B cell (primary cell): ENCODE measurements at regions of chr3 and their contacts with region 1.

Region 1: DNA sequence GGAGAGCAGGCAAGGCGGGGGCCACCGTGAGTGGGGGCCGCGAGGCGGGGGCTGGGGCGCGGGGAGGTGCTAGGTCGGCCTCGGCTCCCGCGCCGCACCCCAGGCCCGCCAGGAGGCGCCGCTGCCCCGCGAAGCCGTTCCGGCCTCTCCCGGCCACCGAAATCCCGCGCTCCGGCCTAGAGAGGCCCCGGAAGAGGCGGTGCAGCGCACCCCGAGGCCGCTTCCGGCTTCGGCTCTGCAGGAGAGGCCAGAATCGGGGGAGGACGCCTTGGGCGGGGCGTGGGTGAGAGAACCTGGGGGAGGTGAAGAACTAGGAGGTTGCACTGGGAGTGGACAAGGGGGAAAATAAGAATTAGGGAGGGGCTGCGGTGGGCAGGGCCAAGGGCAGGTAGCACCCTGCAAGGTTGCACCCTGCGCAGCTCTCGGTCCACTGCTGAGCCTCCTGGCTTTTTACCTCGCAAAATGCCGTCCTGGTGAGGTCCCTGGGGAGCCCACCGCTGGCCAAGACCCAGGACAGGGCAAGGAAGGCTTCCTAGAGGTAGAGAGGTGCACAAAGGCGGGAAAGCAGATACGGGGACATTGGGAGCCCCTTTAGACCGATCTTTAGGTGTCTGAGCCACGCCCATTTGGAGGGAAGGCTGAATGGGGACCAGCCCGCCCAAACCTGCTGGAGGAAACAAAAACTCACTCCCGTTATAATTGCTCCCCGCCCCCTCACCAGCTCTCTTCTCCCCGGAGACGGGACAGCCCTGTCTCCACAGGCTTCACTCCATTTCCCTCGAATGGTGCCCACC is 8.4 kb upstream of the GNAI2 start:
- DNase-seq: peak; percentile 93
- ATAC-seq: peak; percentile 81
- H3K4me3 ChIP-seq: peak overlapping the region; percentile 66 to 82 (median 72)
- H3K4me3 Mint-ChIP-seq: peak overlapping the region; percentile 96
- H3K27ac ChIP-seq: peak overlapping the region; percentile 21 to 41
- H3K27ac Mint-ChIP-seq: peak overlapping the region; percentile 94
- H3K4me1 ChIP-seq: peaks cover 25 to 51% of the 10 kb centered on the region in 2 donors
- H3K4me1 Mint-ChIP-seq: peaks cover 45% of the 10 kb centered on the region
- H3K27me3 ChIP-seq: no peaks in the 10 kb centered on the region
- H3K27me3 Mint-ChIP-seq: peaks cover 4% of the 10 kb centered on the region
- CTCF ChIP-seq: peak; percentile 92

Region 2: GRCh38 chr3:50088725-50089608 is 138.6 kb before region 1 on chr3 and contains the start of gene RBM5:
- CTCF ChIA-PET with region 1: no interaction called
- POLR2A ChIA-PET with region 1: interaction called, 3 read pairs
- intact Hi-C with region 1: loop called (anchors 2 kb)
- DNase-seq: peak; percentile 91
- ATAC-seq: peak; percentile 100
- H3K4me3 ChIP-seq: peak within 1 kb of the TSS; percentile 92 to 98 (median 96)
- H3K4me3 Mint-ChIP-seq: peak within 1 kb of the TSS; percentile 97
- H3K27ac ChIP-seq: peak within 1 kb of the TSS; percentile 94 to 96
- H3K27ac Mint-ChIP-seq: peak within 1 kb of the TSS; percentile 97
- H3K4me1 ChIP-seq: peaks cover 18 to 23% of the 10 kb centered on the region in 2 donors
- H3K4me1 Mint-ChIP-seq: peaks cover 27% of the 10 kb centered on the region
- H3K27me3 ChIP-seq: no peaks in the 10 kb centered on the region
- H3K27me3 Mint-ChIP-seq: no peaks in the 10 kb centered on the region
- CTCF ChIP-seq: no peak
- total RNA-seq, gene RBM5: 464 and 493 TPM in 2 replicates

Region 3: GRCh38 chr3:50154840-50155474 is 72.6 kb before region 1 on chr3 and contains the start of gene SEMA3F:
- CTCF ChIA-PET with region 1: no interaction called
- POLR2A ChIA-PET with region 1: no interaction called
- intact Hi-C with region 1: loop called (anchors 2 kb)
- DNase-seq: peak; percentile 83
- ATAC-seq: peak; percentile 89
- H3K4me3 ChIP-seq: peak within 1 kb of the TSS in 4 of 5 experiments; percentile 17 to 60 (median 54)
- H3K4me3 Mint-ChIP-seq: peak within 1 kb of the TSS; percentile 86
- H3K27ac ChIP-seq: no peak within 1 kb of the TSS
- H3K27ac Mint-ChIP-seq: peak within 1 kb of the TSS; percentile 26
- H3K4me1 ChIP-seq: peaks cover 14 to 20% of the 10 kb centered on the region in 2 donors
- H3K4me1 Mint-ChIP-seq: peaks cover 15% of the 10 kb centered on the region
- H3K27me3 ChIP-seq: peaks cover 0 to 48% (median 19%) of the 10 kb centered on the region in 4 experiments
- H3K27me3 Mint-ChIP-seq: peaks cover 34% of the 10 kb centered on the region
- CTCF ChIP-seq: no peak
- total RNA-seq, gene SEMA3F: 0.27 TPM in 1 of 2 replicates, not detected in the other

Region 4: DNA sequence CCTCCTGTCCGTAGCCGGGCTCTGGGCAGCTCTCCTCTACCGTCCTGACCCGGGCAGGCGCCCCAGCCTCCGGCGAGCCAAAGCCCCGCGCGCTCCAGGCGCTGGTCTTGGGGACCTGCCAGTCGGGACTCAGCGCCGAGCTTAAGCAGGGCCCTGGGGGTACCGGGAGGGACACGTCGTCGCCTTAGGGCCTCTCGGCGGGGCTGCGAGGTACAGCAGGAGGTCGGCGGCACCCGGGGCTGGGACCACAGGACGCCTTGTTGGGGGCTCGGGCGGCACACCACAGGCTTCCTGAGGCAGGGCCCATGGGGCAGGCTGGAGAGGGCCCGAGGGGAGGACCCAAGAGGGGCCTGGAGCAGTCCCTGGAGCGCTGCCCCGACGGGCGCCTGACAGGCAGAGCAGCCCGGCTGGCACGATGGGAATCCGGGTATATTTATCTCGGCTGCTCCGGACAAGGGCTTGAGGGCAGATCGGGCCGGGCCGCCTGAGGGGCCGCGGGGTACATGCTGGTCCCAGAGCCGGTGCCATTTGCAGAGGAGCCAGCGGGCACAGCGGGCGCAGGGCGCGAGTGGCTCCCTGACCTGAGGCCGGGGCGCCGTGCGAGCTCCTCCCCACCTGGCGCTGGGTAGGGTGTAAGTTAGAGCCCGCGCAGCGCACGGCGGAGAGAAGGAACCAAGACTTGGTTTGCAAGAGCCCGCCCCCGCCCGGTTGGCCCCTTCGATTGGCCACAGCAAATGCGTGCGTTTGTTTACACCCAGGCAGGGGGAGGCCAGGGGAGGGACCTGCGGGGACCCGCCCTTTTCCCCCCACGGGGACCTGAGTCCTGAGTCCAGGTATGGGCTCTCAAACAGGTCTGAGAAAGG is 21.9 kb before region 1 on chr3:
- CTCF ChIA-PET with region 1: interaction called, 11 read pairs
- POLR2A ChIA-PET with region 1: no interaction called
- intact Hi-C with region 1: no loop called
- DNase-seq: peak; percentile 66
- ATAC-seq: peak; percentile 74
- H3K4me3 ChIP-seq: peak overlapping the region in 3 of 5 experiments; percentile 9 to 25 (median 10)
- H3K4me3 Mint-ChIP-seq: peak overlapping the region; percentile 47
- H3K27ac ChIP-seq: no peak overlapping the region
- H3K27ac Mint-ChIP-seq: no peak overlapping the region
- H3K4me1 ChIP-seq: peaks cover 15 to 23% of the 10 kb centered on the region in 2 donors
- H3K4me1 Mint-ChIP-seq: peaks cover 2% of the 10 kb centered on the region
- H3K27me3 ChIP-seq: peaks cover 0 to 63% (median 26%) of the 10 kb centered on the region in 4 experiments
- H3K27me3 Mint-ChIP-seq: peaks cover 43% of the 10 kb centered on the region
- CTCF ChIP-seq: no peak

Region 5: DNA sequence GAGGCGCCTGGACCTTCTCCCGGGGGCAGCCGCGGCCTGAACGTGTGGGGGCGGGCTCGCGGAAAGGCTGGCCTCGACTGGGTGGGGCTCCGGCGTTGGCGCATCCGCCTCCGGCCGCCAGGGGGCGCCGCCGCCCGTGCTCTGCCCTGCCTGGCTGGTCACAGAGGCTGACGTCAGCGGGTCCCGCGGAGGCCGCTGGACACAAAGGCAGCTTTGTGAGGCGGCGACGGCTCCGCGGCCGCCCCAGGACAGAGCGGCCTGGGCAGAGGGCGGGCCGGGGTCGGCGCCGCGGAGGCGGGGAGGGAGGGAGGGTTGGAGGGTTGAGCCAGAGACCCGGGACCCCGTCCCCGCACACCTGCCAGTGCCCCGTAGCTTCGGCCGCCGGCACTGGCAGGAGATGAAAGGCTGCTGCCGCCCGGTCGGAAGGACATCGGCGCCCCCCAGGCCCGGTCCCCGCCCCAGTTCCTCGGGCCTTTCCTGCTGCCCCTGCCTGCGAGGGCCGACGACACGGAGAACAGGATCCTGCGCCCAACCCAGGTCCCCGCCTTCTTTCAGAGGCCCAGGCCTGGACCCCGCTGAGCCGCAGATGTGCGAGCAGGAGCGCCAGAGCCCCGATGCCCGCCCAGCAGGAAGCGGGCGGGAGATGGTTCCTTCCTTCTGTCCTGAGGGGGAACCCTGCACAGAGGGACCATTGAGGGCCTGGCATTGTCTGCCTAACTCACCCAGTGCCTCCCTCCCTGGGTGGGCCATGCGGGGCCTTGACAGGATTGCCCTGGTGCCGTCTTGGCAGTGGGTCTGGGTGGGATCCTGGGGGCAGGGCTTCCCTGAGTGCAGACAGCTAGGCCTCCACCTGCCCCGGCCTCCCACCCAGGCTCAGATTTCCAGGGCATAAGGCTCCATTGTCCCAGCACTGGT is 32.7 kb after region 1 on chr3:
- CTCF ChIA-PET with region 1: interaction called, 596 read pairs
- POLR2A ChIA-PET with region 1: interaction called, 21 read pairs
- intact Hi-C with region 1: loop called (anchors 1 kb)
- DNase-seq: peak; percentile 90
- ATAC-seq: peak; percentile 93
- H3K4me3 ChIP-seq: peak overlapping the region in 4 of 5 experiments; percentile 48 to 58 (median 54)
- H3K4me3 Mint-ChIP-seq: peak overlapping the region; percentile 77
- H3K27ac ChIP-seq: peak overlapping the region; percentile 44 to 79
- H3K27ac Mint-ChIP-seq: peak overlapping the region; percentile 80
- H3K4me1 ChIP-seq: peaks cover 12 to 17% of the 10 kb centered on the region in 2 donors
- H3K4me1 Mint-ChIP-seq: peaks cover 12% of the 10 kb centered on the region
- H3K27me3 ChIP-seq: peaks cover 0 to 5% (median 0%) of the 10 kb centered on the region in 4 experiments
- H3K27me3 Mint-ChIP-seq: no peaks in the 10 kb centered on the region
- CTCF ChIP-seq: peak; percentile 93

Region 6: DNA sequence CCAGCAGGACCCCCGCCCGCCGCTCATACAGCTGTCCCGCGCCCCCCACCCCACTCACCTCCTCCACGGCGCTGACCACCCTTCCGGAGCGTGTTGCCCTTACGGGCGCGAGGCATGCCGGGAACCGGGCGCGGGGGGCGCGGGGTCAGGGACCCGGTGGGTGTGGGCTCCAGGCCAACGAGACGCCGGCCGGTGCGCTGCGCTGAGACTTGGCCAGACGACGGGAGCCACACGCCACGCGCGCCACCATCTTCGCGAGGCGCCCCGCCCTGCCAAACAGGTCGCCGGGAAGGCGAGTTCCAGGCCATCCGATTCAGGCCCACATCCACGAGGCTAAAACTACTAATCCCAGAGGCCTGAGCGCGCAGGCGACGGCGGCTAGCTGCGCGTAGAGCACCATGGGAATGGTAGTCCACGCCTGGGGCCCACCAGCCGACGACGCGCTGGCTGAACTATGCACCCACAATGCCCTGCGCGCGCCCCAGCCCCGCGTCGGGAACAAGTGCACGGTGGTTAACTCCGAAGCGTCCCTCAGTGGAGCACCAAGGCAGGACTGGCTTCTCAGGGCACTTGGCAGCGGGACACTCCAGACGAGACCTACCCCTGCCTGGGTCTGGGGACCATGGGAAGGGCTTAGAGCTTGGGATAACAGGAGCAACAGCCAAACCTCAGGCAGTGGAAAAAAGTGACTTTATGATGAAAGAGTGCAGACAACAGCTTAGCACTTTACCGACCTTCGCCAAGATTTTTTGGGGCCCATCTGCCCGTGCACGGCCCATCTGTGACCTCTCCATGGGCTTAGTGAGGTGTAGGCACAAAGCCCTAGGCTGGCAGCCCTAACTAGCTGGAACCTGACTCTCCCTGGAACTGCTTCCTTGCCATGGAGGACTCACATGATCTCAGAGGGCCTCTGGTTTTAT is 64.8 kb after region 1 on chr3 and contains the start of gene IFRD2:
- CTCF ChIA-PET with region 1: interaction called, 9 read pairs
- POLR2A ChIA-PET with region 1: interaction called, 3 read pairs
- intact Hi-C with region 1: loop called (anchors 1 kb)
- DNase-seq: peak; percentile 97
- ATAC-seq: peak; percentile 99
- H3K4me3 ChIP-seq: peak within 1 kb of the TSS; percentile 56 to 94 (median 81)
- H3K4me3 Mint-ChIP-seq: peak within 1 kb of the TSS; percentile 92
- H3K27ac ChIP-seq: peak within 1 kb of the TSS; percentile 57 to 85
- H3K27ac Mint-ChIP-seq: peak within 1 kb of the TSS; percentile 96
- H3K4me1 ChIP-seq: peaks cover 11 to 17% of the 10 kb centered on the region in 2 donors
- H3K4me1 Mint-ChIP-seq: peaks cover 17% of the 10 kb centered on the region
- H3K27me3 ChIP-seq: no peaks in the 10 kb centered on the region
- H3K27me3 Mint-ChIP-seq: no peaks in the 10 kb centered on the region
- CTCF ChIP-seq: no peak
- total RNA-seq, gene IFRD2: 55.8 and 63.4 TPM in 2 replicates

Region 7: GRCh38 chr3:50342818-50343633 is 115.4 kb after region 1 on chr3:
- CTCF ChIA-PET with region 1: no interaction called
- POLR2A ChIA-PET with region 1: no interaction called
- intact Hi-C with region 1: no loop called
- DNase-seq: no peak
- ATAC-seq: no peak
- H3K4me3 ChIP-seq: no peak overlapping the region
- H3K4me3 Mint-ChIP-seq: peak overlapping the region; percentile 3
- H3K27ac ChIP-seq: no peak overlapping the region
- H3K27ac Mint-ChIP-seq: peak overlapping the region; percentile 50
- H3K4me1 ChIP-seq: peaks cover 35 to 61% of the 10 kb centered on the region in 2 donors
- H3K4me1 Mint-ChIP-seq: peaks cover 54% of the 10 kb centered on the region
- H3K27me3 ChIP-seq: no peaks in the 10 kb centered on the region
- H3K27me3 Mint-ChIP-seq: no peaks in the 10 kb centered on the region
- CTCF ChIP-seq: no peak